Dendritic cell treated with granulocyte-macrophage colony-stimulating factor and Interleukin-4, amounts not matched to agents 40 ng/mL and 50 ng/mL, for 4 days (primary cell): ENCODE measurements at regions of chr11 and their contacts with region 1.

Region 1: DNA sequence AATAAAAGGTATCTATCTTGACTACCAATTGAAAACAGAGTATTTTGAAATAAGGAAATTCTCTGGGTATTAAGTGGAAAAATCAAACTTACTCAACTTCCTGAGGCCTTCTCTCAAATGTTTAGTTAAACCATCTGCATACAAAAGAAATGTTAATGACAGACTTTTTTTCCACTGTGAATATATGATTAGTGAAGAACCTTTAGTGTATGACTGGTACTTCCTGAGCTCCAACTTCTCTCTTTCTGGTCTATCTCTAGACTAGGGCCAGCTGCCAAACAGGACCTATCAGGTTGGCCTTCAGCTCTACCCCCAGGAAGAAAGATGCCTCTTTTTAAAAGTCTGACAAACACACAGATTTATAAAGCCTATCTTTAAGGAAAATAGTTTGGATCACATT is 68.8 kb upstream of the SCUBE2 start:
- H3K4me3 Mint-ChIP-seq: no peak overlapping the region
- H3K27ac Mint-ChIP-seq: peak overlapping the region; percentile 47
- H3K4me1 Mint-ChIP-seq: peaks cover 16% of the 10 kb centered on the region
- H3K27me3 Mint-ChIP-seq: no peaks in the 10 kb centered on the region

Region 2: GRCh38 chr11:9506489-9507276 is 346.5 kb after region 1 on chr11:
- intact Hi-C with region 1: loop called (anchors 10 kb)
- H3K4me3 Mint-ChIP-seq: no peak overlapping the region
- H3K27ac Mint-ChIP-seq: no peak overlapping the region
- H3K4me1 Mint-ChIP-seq: peaks cover 5% of the 10 kb centered on the region
- H3K27me3 Mint-ChIP-seq: no peaks in the 10 kb centered on the region

Region 3: DNA sequence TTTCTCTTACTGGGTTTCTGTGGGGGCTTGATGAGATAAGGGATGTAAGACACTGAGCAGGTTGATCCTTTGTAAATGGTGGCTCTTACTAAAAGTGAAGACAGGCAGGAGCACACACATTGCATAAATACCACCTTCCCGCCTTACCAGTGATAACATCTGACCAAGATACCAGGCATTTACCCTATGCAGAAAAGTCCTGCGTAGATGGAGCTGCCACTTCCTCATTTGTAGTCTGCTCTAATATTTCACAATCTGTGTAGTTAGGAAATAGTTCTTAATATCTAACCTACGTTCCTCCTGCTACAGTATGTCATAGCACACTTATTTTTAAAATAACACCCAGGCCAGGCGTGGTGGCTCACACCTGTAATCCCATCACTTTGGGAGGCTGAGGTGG is 479.8 kb after region 1 on chr11:
- intact Hi-C with region 1: no loop called
- H3K4me3 Mint-ChIP-seq: no peak overlapping the region
- H3K27ac Mint-ChIP-seq: peak overlapping the region; percentile 18
- H3K4me1 Mint-ChIP-seq: peaks cover 32% of the 10 kb centered on the region
- H3K27me3 Mint-ChIP-seq: no peaks in the 10 kb centered on the region